Naive thymus-derived CD4-positive, alpha-beta T cell (primary cell): ENCODE measurements at regions of chr15 and their contacts with region 1.

Region 1: GRCh38 chr15:39874890-39875549 is 45.0 kb downstream of the GPR176 start:
- DNase-seq: peak in 5 of 9 donors; percentile 2 to 21 (median 9)
- ATAC-seq: peak; percentile 51
- H3K4me3 ChIP-seq: no peak overlapping the region
- H3K4me3 Mint-ChIP-seq: no peak overlapping the region
- H3K27ac ChIP-seq: no peak overlapping the region
- H3K27ac Mint-ChIP-seq: no peak overlapping the region
- H3K4me1 ChIP-seq: no peaks in the 10 kb centered on the region
- H3K4me1 Mint-ChIP-seq: no peaks in the 10 kb centered on the region
- H3K27me3 ChIP-seq: no peaks in the 10 kb centered on the region
- H3K27me3 Mint-ChIP-seq: peaks cover 0 to 21% (median 0%) of the 10 kb centered on the region in 5 donors

Region 2: DNA sequence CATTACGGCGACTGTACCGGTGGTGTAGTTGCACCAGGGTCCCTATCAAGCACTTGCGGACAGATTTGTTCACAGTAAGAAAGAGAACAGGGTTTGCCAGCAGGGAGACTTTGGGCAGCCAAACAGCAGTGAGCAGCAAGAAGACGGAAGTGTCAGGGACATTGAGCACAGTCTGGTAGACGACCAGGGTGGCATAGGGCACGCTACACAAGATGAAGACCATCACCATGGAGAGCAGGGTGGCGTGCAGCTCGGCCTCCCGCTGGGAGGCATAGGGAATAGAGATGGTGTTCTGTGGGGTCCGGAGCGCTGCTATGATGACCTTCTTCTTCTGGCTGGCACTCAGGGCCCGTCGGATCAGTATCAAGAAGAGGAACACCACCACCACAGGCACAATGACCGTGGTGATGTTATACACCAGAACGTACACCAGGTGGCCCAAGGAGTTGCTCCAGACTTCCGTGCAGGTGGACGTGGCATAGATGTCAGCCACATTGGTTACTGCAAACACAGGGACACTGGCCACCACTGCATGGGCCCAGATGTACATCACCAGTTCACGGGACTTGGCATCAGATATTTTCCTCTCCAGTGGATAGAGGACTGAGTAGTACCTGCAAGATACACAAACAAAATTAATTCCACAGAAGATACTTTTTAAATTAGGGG is 73.2 kb before region 1 on chr15:
- CTCF ChIA-PET with region 1: no interaction called
- POLR2A ChIA-PET with region 1: no interaction called
- intact Hi-C with region 1: loop called in 1 of 2 experiments (anchors 5 kb)
- DNase-seq: no peak
- ATAC-seq: peak; percentile 31
- H3K4me3 ChIP-seq: no peak overlapping the region
- H3K4me3 Mint-ChIP-seq: no peak overlapping the region
- H3K27ac ChIP-seq: no peak overlapping the region
- H3K27ac Mint-ChIP-seq: no peak overlapping the region
- H3K4me1 ChIP-seq: no peaks in the 10 kb centered on the region
- H3K4me1 Mint-ChIP-seq: no peaks in the 10 kb centered on the region
- H3K27me3 ChIP-seq: peaks cover 0 to 3% of the 10 kb centered on the region in 2 donors
- H3K27me3 Mint-ChIP-seq: peaks cover 26 to 65% (median 36%) of the 10 kb centered on the region in 5 donors